IMR-90 (cell line): ENCODE measurements at regions of chr3 and their contacts with region 1.

Region 1: GRCh38 chr3:123535580-123535979 is 49.3 kb downstream of the HACD2 start:
- DNase-seq: peak; percentile 75
- ATAC-seq: peak; percentile 69
- H3K4me3 ChIP-seq: no peak overlapping the region
- H3K27ac ChIP-seq: no peak overlapping the region
- H3K4me1 ChIP-seq: peaks cover 8% of the 10 kb centered on the region
- H3K27me3 ChIP-seq: no peaks in the 10 kb centered on the region
- CTCF ChIP-seq: no peak
- POLR2A ChIP-seq: no peak
- RAD21 ChIP-seq: no peak

Region 2: DNA sequence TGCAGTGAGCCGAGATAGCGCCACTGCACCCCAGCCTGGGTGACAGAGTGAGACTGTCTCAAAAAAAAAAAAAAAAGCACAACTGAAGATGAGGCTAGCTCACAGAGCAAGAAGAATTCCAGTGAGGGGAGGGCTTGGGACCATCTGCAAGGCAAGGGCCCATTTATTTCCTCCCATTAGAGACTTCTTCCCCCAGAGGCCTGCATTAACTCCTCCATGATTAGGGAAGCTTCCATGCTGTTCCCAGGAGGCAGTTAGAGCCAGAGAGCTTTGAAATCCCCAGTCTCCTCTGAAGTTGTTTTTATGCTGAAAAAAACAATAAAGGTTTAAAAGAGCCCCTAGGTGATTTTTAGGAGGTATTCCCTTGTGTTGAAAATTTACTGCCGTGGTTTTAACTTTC is 32.4 kb before region 1 on chr3:
- CTCF ChIA-PET with region 1: no interaction called
- POLR2A ChIA-PET with region 1: no interaction called
- dilution Hi-C with region 1: no loop called
- in situ Hi-C with region 1: no loop called
- intact Hi-C with region 1: loop called (anchors 5 kb)
- DNase-seq: no peak
- ATAC-seq: no peak
- H3K4me3 ChIP-seq: no peak overlapping the region
- H3K27ac ChIP-seq: no peak overlapping the region
- H3K4me1 ChIP-seq: peaks cover 4% of the 10 kb centered on the region
- H3K27me3 ChIP-seq: no peaks in the 10 kb centered on the region
- CTCF ChIP-seq: no peak
- POLR2A ChIP-seq: no peak
- RAD21 ChIP-seq: no peak